ENCODE measurements at regions of chr1 and their contacts with region 1.

Region 1: DNA sequence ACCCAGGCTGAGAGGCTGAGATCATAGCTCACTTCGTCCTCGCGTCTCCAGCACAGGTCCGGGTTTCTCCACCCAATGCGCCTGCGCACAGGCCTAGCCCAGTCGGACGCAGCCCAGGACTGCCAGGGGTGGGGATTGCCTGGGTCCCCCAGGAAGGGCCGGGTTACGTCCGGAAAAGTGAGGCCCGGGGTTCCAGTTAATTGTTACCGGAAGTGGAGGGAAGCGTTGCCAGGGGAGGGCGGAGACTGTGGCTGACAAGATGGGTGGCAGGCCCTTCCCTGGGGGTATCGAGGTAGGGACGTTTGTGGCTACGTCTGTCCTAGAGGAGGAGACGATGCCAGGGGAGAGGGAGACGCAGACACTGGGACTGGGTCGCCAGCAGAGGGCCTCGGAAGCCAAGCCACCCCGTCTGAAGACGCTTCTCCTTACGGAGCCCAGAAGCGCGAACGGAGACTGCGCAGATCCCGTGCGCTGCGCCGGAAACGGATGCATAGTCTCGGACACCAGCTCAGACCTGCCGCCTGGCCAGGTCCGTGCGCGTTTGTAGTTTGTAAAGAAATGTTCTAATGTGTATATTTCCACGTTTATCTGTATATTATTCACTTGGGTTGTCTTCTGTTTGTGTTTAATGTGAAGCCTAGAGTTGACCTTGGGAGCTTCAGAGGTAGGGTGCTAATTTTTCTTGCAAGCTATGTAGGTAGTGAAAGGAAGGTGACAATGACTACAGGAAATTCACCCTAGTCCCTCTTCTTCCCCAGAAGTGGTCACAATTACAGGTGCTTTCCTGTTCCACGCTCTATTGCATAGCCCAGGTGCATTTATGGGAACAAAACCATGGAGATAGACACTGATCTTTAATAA is 7.3 kb downstream of the RSRP1 start:
- DNase-seq: peak; percentile 76 to 95 (median 86)
- ATAC-seq: peak; percentile 88
- H3K4me3 ChIP-seq: peak overlapping the region; percentile 34
- H3K27ac ChIP-seq: peak overlapping the region; percentile 70
- H3K4me1 ChIP-seq: peaks cover 44 to 45% of the 10 kb centered on the region in 2 experiments
- H3K27me3 ChIP-seq: no peaks in the 10 kb centered on the region
- CTCF ChIP-seq: peak; percentile 82 to 85 (median 82)
- EP300 ChIP-seq: peak; percentile 49; the same call in 1 of the 2 replicates
- POLR2A ChIP-seq: peak; percentile 91
- RAD21 ChIP-seq: peak; percentile 73 to 84

Region 2: DNA sequence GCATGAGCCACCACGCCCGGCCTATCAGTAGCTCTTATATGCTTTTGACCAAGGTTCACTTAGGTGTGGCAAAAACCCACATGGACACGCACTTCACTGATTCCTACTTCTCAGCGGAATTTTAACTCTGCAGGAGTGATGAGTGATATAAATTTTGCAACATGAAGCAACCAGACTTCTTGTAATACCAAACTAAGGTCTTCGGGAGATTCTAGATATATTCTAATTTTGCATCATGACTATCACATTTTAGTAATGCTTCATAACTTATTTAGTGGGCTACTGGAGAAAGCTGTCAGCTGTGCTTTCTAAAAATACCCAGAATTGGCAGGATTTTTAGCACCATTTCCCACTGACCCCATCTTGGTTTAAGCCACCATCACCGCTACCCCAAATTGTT is 152.9 kb after region 1 on chr1:
- CTCF ChIA-PET with region 1: no interaction called
- POLR2A ChIA-PET with region 1: no interaction called
- in situ Hi-C with region 1: no loop called
- intact Hi-C with region 1: loop called (anchors 10 kb)
- DNase-seq: no peak
- ATAC-seq: no peak
- H3K4me3 ChIP-seq: no peak overlapping the region
- H3K27ac ChIP-seq: no peak overlapping the region
- H3K4me1 ChIP-seq: no peaks in the 10 kb centered on the region; a peak in 2 of 5 replicates
- H3K27me3 ChIP-seq: no peaks in the 10 kb centered on the region
- CTCF ChIP-seq: no peak
- EP300 ChIP-seq: no peak
- POLR2A ChIP-seq: no peak
- RAD21 ChIP-seq: no peak

Measured in K562 (cell line).